Activated naive CD4-positive, alpha-beta T cell treated with anti-CD3 and anti-CD28 coated beads, Interleukin-2, amount 10 ng/mL, durations not matched to agents 7 days and 5 days (primary cell): ENCODE measurements at regions of chr6 and their contacts with region 1.

Region 1: GRCh38 chr6:25138237-25139125 is 140.7 kb upstream of the CARMIL1 start:
- DNase-seq: peak; percentile 76
- H3K4me3 Mint-ChIP-seq: peak overlapping the region; percentile 87
- H3K27ac Mint-ChIP-seq: peak overlapping the region; percentile 97
- H3K4me1 Mint-ChIP-seq: peaks cover 31% of the 10 kb centered on the region
- H3K27me3 Mint-ChIP-seq: no peaks in the 10 kb centered on the region

Region 2: GRCh38 chr6:24902782-24903181 is 235.7 kb before region 1 on chr6:
- CTCF ChIA-PET with region 1: no interaction called
- DNase-seq: no peak
- H3K4me3 Mint-ChIP-seq: no peak overlapping the region
- H3K27ac Mint-ChIP-seq: peak overlapping the region; percentile 83
- H3K4me1 Mint-ChIP-seq: peaks cover 97% of the 10 kb centered on the region
- H3K27me3 Mint-ChIP-seq: no peaks in the 10 kb centered on the region

Region 3: GRCh38 chr6:25173951-25174474 is 35.5 kb after region 1 on chr6:
- CTCF ChIA-PET with region 1: interaction called, 25 read pairs
- DNase-seq: no peak
- H3K4me3 Mint-ChIP-seq: no peak overlapping the region
- H3K27ac Mint-ChIP-seq: no peak overlapping the region
- H3K4me1 Mint-ChIP-seq: peaks cover 32% of the 10 kb centered on the region
- H3K27me3 Mint-ChIP-seq: peaks cover 4% of the 10 kb centered on the region